ENCODE measurements at regions of chr9 and their contacts with region 1.

Region 1: DNA sequence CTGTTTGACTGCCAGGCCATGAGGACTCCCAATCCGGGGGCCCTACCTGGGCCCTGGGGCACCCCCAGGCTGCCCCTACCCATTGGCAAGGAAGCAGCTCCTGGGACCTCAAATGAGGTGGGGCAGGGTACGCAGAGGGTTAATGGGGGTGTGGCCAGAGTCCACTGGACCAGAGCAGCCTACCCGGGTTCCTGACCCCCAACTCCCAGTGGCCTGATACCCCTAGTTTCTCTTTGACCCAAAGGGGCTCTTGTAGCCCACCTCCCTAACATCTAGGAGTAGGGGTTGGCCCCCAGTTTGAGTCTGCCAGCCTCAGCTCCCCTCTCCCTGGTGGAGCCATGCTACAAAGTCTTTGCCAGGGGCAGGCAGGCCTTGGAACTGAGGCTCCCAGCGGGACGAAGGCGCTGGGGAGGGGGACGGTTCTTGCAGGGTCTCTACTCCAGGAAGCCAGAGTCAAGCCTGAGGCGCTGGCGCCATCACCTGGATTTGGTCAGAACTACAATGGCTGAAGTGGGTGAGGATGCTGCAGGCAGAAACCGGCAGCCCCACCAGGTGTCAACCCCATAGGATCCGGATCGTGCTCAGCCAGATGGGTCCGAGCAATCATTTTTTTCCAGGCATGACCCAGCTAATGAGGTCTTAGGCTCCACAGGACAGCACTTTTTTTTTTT is 8.4 kb upstream of the CERCAM start:
- DNase-seq: peak; percentile 52
- ATAC-seq: peak; percentile 30; the same call in 1 of the 2 replicates
- H3K4me3 ChIP-seq: no peak overlapping the region
- H3K27ac ChIP-seq: no peak overlapping the region
- H3K4me1 ChIP-seq: peaks cover 7% of the 10 kb centered on the region; the same call in 1 of the 2 replicates
- H3K27me3 ChIP-seq: no peaks in the 10 kb centered on the region
- CTCF ChIP-seq: peak; percentile 58

Region 2: DNA sequence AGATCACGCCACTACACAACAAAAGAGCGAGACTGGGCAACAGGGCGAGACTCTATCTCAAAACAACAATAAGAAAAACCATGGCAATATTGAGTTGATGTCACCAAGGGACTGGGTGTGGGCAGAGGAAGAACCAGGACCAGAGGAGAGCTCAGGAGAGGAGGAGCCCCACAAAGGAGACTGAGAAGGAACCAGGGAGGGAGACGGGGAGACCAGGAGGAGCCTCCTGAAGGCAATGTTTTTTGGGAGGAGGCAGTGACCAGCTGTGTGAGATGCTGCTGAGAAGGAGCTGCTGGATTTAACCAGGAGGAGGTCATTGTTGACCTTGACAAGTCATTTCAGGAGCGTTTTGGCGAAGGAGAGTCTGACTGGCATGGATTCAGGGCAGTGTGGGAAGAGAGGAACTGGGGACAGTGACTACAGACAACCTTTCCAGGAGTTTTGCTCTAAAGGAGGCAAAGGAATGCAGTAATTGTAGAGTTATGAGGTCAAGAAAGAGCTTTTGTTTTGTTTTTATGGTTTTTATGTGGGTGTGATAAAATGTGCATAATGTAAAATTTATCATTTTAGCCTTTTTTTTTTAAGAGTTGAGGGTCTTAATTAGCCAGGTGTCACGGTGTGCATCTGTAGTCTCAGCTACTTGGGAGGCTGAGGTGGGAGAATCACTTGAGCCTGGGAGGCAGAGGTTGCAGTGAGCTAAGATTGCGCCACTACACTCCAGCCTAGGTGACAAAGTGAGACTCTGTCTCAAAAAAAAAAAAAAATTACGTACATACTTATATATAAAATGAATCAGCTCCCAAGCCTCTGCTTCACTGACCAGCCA is 107.9 kb before region 1 on chr9:
- CTCF ChIA-PET with region 1: no interaction called
- POLR2A ChIA-PET with region 1: interaction called, 26 read pairs
- intact Hi-C with region 1: no loop called
- DNase-seq: no peak
- ATAC-seq: no peak
- H3K4me3 ChIP-seq: no peak overlapping the region
- H3K27ac ChIP-seq: peak overlapping the region; percentile 43
- H3K4me1 ChIP-seq: peaks cover 24% of the 10 kb centered on the region
- H3K27me3 ChIP-seq: no peaks in the 10 kb centered on the region
- CTCF ChIP-seq: no peak

Region 3: GRCh38 chr9:128361986-128362646 is 50.1 kb before region 1 on chr9:
- CTCF ChIA-PET with region 1: no interaction called
- POLR2A ChIA-PET with region 1: no interaction called
- intact Hi-C with region 1: loop called (anchors 5 kb)
- DNase-seq: peak; percentile 79
- ATAC-seq: peak; percentile 89
- H3K4me3 ChIP-seq: peak overlapping the region; percentile 64
- H3K27ac ChIP-seq: no peak overlapping the region
- H3K4me1 ChIP-seq: peaks cover 12% of the 10 kb centered on the region
- H3K27me3 ChIP-seq: no peaks in the 10 kb centered on the region
- CTCF ChIP-seq: peak; percentile 80

Region 4: GRCh38 chr9:128442150-128442549 is 29.9 kb after region 1 on chr9:
- CTCF ChIA-PET with region 1: no interaction called
- POLR2A ChIA-PET with region 1: no interaction called
- intact Hi-C with region 1: no loop called
- DNase-seq: no peak
- ATAC-seq: no peak
- H3K4me3 ChIP-seq: no peak overlapping the region
- H3K27ac ChIP-seq: no peak overlapping the region
- H3K4me1 ChIP-seq: no peaks in the 10 kb centered on the region
- H3K27me3 ChIP-seq: no peaks in the 10 kb centered on the region
- CTCF ChIP-seq: no peak